ENCODE measurements at regions of chr6 and their contacts with region 1.

Region 1: GRCh38 chr6:51868591-51869355 is 218.6 kb downstream of the PKHD1 start:
- DNase-seq: no peak
- ATAC-seq: peak; percentile 83
- H3K4me3 ChIP-seq: no peak overlapping the region
- H3K27ac ChIP-seq: no peak overlapping the region
- H3K4me1 ChIP-seq: no peaks in the 10 kb centered on the region
- H3K27me3 ChIP-seq: peaks cover 0 to 7% of the 10 kb centered on the region in 2 experiments; a peak in 1 of 4 replicates
- CTCF ChIP-seq: no peak
- EP300 ChIP-seq: no peak
- POLR2A ChIP-seq: no peak
- RAD21 ChIP-seq: no peak

Region 2: GRCh38 chr6:51885957-51886356 is 17.2 kb after region 1 on chr6:
- CTCF ChIA-PET with region 1: interaction called, 11 read pairs
- POLR2A ChIA-PET with region 1: no interaction called
- RAD21 ChIA-PET with region 1: no interaction called
- SMC1A ChIA-PET with region 1: interaction called, 18 read pairs
- in situ Hi-C with region 1: no loop called
- intact Hi-C with region 1: no loop called
- DNase-seq: no peak
- ATAC-seq: no peak
- H3K4me3 ChIP-seq: no peak overlapping the region
- H3K27ac ChIP-seq: no peak overlapping the region
- H3K4me1 ChIP-seq: no peaks in the 10 kb centered on the region
- H3K27me3 ChIP-seq: no peaks in the 10 kb centered on the region
- CTCF ChIP-seq: no peak
- EP300 ChIP-seq: no peak
- POLR2A ChIP-seq: no peak
- RAD21 ChIP-seq: no peak

Region 3: DNA sequence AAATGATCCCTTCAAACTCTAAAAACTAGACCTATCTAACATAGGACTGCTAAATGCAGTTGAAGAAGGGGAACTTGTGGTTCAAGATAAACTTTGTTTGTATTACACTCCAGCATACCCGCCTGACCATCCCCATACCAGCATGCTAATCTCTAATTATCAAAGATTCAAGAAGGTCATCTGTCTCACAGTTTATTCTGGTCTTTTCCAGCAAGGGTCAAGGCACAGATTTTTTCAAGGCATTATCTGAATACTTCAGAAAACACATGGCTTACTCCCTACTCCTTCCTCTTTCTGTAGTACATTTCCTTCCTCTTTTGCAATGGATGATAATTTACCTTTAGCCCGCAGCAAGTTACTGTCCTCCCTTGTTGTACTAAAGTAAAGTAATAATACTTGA is 44.5 kb after region 1 on chr6:
- CTCF ChIA-PET with region 1: interaction called, 3 read pairs
- POLR2A ChIA-PET with region 1: no interaction called
- RAD21 ChIA-PET with region 1: no interaction called
- SMC1A ChIA-PET with region 1: interaction called, 6 read pairs
- in situ Hi-C with region 1: no loop called
- intact Hi-C with region 1: loop called (anchors 5 kb)
- DNase-seq: no peak
- ATAC-seq: peak; percentile 36; the same call in 2 of the 3 replicates
- H3K4me3 ChIP-seq: no peak overlapping the region
- H3K27ac ChIP-seq: no peak overlapping the region
- H3K4me1 ChIP-seq: no peaks in the 10 kb centered on the region
- H3K27me3 ChIP-seq: no peaks in the 10 kb centered on the region
- CTCF ChIP-seq: no peak
- EP300 ChIP-seq: no peak
- POLR2A ChIP-seq: no peak
- RAD21 ChIP-seq: no peak